Right ventricle myocardium superior (tissue), 1 donor: ENCODE measurements at regions of chr18 and their contacts with region 1.

Region 1: GRCh38 chr18:11980555-11981382 is 538 bp upstream of the IMPA2 start:
- DNase-seq: peak; percentile 99
- ATAC-seq: peak; percentile 90

Region 2: GRCh38 chr18:11947214-11948191 is 33.3 kb before region 1 on chr18:
- intact Hi-C with region 1: loop called (anchors 2 kb)
- DNase-seq: peak; percentile 97
- ATAC-seq: peak; percentile 98

Region 3: GRCh38 chr18:12031846-12032245 is 51.1 kb after region 1 on chr18:
- intact Hi-C with region 1: loop called (anchors 5 kb)
- DNase-seq: peak; percentile 76
- ATAC-seq: no peak